Spleen (tissue), 13 donors: ENCODE measurements at regions of chr7 and their contacts with region 1.

Region 1: GRCh38 chr7:43844031-43844656 is 25.2 kb downstream of the MRPS24 start:
- DNase-seq: no peak
- H3K4me3 ChIP-seq: no peak overlapping the region
- H3K27ac ChIP-seq: no peak overlapping the region
- H3K4me1 ChIP-seq: peaks cover 0 to 4% (median 1%) of the 10 kb centered on the region in 6 donors
- H3K27me3 ChIP-seq: no peaks in the 10 kb centered on the region
- CTCF ChIP-seq: no peak
- POLR2A ChIP-seq: no peak

Region 2: GRCh38 chr7:43721193-43721806 is 122.8 kb before region 1 on chr7:
- intact Hi-C with region 1: loop called (anchors 5 kb)
- DNase-seq: no peak
- H3K4me3 ChIP-seq: no peak overlapping the region
- H3K27ac ChIP-seq: no peak overlapping the region
- H3K4me1 ChIP-seq: peaks cover 0 to 64% (median 15%) of the 10 kb centered on the region in 6 donors
- H3K27me3 ChIP-seq: no peaks in the 10 kb centered on the region
- CTCF ChIP-seq: peak; percentile 40 to 77 (median 69)
- POLR2A ChIP-seq: no peak

Region 3: GRCh38 chr7:44072364-44073231 is 228.5 kb after region 1 on chr7:
- intact Hi-C with region 1: no loop called
- DNase-seq: peak; percentile 86
- H3K4me3 ChIP-seq: peak overlapping the region in 1 of 8 donors; percentile 61
- H3K27ac ChIP-seq: peak overlapping the region; percentile 53 to 98 (median 94)
- H3K4me1 ChIP-seq: peaks cover 18 to 79% (median 45%) of the 10 kb centered on the region in 6 donors
- H3K27me3 ChIP-seq: no peaks in the 10 kb centered on the region
- CTCF ChIP-seq: peak in 10 of 11 experiments; percentile 35 to 76 (median 66)
- POLR2A ChIP-seq: no peak